K562 (cell line): ENCODE measurements at regions of chr15 and their contacts with region 1.

Region 1: DNA sequence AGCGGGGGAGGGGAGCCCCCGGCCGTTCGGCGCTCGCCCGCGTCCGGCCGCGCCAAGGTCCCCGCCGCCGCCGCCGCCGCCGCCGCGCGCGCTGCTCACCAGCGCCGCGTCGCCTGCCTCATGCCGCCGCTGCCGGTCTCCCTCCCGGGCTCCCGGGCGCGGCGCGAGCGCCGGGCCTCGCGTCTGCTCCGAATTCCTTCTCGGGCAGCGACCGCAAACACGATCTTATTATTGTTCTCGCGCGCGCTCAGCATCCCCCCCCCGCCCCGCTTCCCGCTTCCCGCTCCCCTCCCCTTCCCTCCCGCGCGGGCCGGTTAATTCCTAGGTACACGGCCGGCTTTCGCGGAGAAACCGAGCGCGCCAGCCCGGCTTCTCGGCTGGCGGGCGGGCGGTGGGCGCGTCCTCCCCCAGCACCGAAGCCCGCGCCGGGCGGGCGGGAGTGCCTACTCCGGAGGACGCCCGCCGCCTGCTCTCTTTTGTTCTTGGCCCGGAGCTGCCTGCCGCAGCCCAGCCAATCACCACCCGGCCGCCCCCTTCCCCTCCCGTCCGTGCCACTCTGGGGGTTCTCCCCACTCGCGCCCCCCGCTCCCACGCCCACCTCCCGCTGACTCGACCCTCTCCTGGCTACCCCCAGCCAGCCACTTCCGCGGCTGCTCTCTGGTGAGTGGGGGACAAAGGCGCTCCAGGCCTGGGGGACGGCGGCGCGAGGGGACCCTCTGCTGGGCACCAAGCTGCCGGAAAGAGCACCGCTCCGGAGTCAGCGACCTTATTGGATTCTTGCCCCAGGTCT is at the start of gene HDGFL3:
- DNase-seq: peak in 3 of 4 experiments; percentile 60 to 62 (median 62)
- ATAC-seq: peak; percentile 65
- H3K4me3 ChIP-seq: peak within 1 kb of the TSS; percentile 69
- H3K27ac ChIP-seq: peak within 1 kb of the TSS; percentile 68
- H3K4me1 ChIP-seq: peaks cover 14 to 18% of the 10 kb centered on the region in 2 experiments
- H3K27me3 ChIP-seq: peaks cover 2 to 6% of the 10 kb centered on the region in 2 experiments; a peak in 3 of 5 replicates
- CTCF ChIP-seq: peak in 2 of 3 experiments; percentile 40 to 41; a peak in 3 of 6 replicates
- EP300 ChIP-seq: no peak
- POLR2A ChIP-seq: 0 out of 2 replicates have a peak, but pooled peaks have one; percentile 31
- RAD21 ChIP-seq: peak; percentile 51 to 60
- polyA plus RNA-seq, gene HDGFL3: 6.7 to 7.5 TPM

Region 2: GRCh38 chr15:82737975-82738374 is 469.8 kb before region 1 on chr15:
- CTCF ChIA-PET with region 1: no interaction called
- POLR2A ChIA-PET with region 1: no interaction called
- in situ Hi-C with region 1: no loop called
- intact Hi-C with region 1: no loop called
- DNase-seq: peak in 2 of 4 experiments; percentile 26 to 32
- ATAC-seq: peak; percentile 79
- H3K4me3 ChIP-seq: no peak overlapping the region
- H3K27ac ChIP-seq: peak overlapping the region; percentile 41; the same call in 1 of the 3 replicates
- H3K4me1 ChIP-seq: peaks cover 0 to 7% of the 10 kb centered on the region in 2 experiments; a peak in 2 of 5 replicates
- H3K27me3 ChIP-seq: no peaks in the 10 kb centered on the region
- CTCF ChIP-seq: no peak
- EP300 ChIP-seq: no peak
- POLR2A ChIP-seq: no peak
- RAD21 ChIP-seq: no peak

Region 3: GRCh38 chr15:83066734-83067637 is 140.8 kb before region 1 on chr15 and contains the start of gene BTBD1:
- CTCF ChIA-PET with region 1: no interaction called
- POLR2A ChIA-PET with region 1: interaction called, 5 read pairs
- in situ Hi-C with region 1: no loop called
- intact Hi-C with region 1: loop called (anchors 5 kb)
- DNase-seq: peak; percentile 94 to 97 (median 96)
- ATAC-seq: peak; percentile 95
- H3K4me3 ChIP-seq: peak within 1 kb of the TSS; percentile 90
- H3K27ac ChIP-seq: peak within 1 kb of the TSS; percentile 92
- H3K4me1 ChIP-seq: peaks cover 9 to 29% of the 10 kb centered on the region in 2 experiments
- H3K27me3 ChIP-seq: no peaks in the 10 kb centered on the region
- CTCF ChIP-seq: peak in 2 of 3 experiments; percentile 10 to 33; a peak in 3 of 6 replicates
- EP300 ChIP-seq: no peak
- POLR2A ChIP-seq: peak; percentile 94
- RAD21 ChIP-seq: no peak; a peak in 2 of 4 replicates
- polyA plus RNA-seq, gene BTBD1: 19.4 to 27.2 TPM

Region 4: DNA sequence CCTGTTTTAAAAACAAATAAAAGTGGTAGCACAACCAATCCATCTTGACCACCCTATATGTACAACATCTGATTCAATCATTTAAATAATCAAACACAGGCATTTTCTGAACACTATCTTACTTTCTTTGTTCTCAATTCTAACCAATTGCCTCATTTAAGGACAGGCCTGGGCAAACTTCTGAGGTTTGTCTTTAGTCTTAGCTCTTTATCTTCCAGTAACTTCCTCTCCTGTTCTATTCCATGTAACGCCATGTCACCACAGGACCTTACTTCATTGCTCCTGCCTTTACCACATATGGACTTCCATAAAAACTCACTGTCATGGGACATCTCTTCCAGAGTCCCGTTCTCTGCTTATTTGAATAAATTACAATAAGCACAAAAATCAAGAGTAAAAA is 15.1 kb before region 1 on chr15:
- CTCF ChIA-PET with region 1: no interaction called
- POLR2A ChIA-PET with region 1: interaction called, 12 read pairs
- in situ Hi-C with region 1: no loop called
- intact Hi-C with region 1: no loop called
- DNase-seq: peak in 1 of 4 experiments; percentile 21
- ATAC-seq: peak; percentile 68
- H3K4me3 ChIP-seq: no peak overlapping the region
- H3K27ac ChIP-seq: peak overlapping the region; percentile 16; the same call in 1 of the 3 replicates
- H3K4me1 ChIP-seq: peaks cover 0 to 18% of the 10 kb centered on the region in 2 experiments; a peak in 4 of 5 replicates
- H3K27me3 ChIP-seq: no peaks in the 10 kb centered on the region
- CTCF ChIP-seq: no peak
- EP300 ChIP-seq: no peak
- POLR2A ChIP-seq: no peak
- RAD21 ChIP-seq: no peak

Region 5: DNA sequence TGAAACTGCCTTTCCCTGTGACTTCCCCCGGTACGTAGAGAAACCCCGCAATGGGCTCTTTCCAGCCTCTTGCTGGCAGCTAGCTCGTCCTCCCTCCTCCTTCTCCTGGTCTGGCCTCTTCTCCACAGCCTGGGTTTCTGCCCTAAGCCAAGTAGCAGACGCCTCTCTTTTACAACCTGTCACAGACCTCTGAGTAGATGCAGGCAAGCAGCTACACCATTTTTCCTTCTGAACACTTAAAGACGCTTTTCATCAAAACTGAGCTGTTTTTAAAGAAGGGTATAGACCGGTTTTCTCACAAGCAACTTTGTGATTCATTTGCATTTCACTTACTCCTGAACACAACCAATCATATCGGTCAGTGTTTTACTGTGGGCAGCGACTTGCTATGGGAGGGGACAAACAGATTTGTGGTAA is 478.1 kb after region 1 on chr15:
- CTCF ChIA-PET with region 1: no interaction called
- POLR2A ChIA-PET with region 1: no interaction called
- in situ Hi-C with region 1: no loop called
- intact Hi-C with region 1: no loop called
- DNase-seq: no peak
- ATAC-seq: no peak
- H3K4me3 ChIP-seq: no peak overlapping the region
- H3K27ac ChIP-seq: no peak overlapping the region
- H3K4me1 ChIP-seq: no peaks in the 10 kb centered on the region
- H3K27me3 ChIP-seq: peaks cover 0 to 9% of the 10 kb centered on the region in 2 experiments; a peak in 2 of 5 replicates
- CTCF ChIP-seq: no peak
- EP300 ChIP-seq: no peak
- POLR2A ChIP-seq: no peak
- RAD21 ChIP-seq: no peak